Esophagus squamous epithelium (tissue), 5 donors: ENCODE measurements at regions of chr1 and their contacts with region 1.

Region 1: DNA sequence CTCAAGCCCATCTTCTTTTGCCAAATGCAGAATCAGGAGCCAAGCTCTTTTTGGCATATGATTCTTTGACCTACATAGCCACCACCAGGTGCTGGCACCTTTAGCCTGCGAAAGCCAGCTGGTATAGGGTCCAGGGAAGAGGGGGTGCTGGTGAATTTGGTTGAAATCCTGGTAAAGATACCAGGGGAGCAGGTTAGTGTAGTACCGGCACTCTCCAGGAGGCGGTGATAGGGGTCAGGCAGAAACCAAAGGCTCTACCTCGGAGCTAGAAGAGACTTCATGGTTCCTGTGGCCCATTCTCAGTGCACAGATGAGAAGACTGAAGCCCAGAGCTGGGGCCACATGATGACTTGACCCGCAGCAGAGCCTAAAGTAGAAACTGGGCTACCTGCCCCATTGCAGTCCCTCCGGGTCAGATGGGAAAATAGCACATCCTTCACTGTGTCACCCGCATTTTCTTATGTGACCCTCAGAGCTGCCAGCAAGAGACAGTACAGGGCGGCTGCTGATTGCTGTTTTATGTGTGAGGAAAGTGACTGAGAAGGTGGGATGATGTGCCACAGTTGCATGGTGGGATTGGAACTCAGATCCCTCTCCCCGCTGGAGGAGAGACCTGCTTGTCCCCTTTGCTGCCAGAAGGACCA is 36.0 kb upstream of the IL19 start:
- DNase-seq: no peak
- H3K4me3 ChIP-seq: no peak overlapping the region
- H3K27ac ChIP-seq: no peak overlapping the region
- H3K4me1 ChIP-seq: peaks cover 0 to 35% (median 0%) of the 10 kb centered on the region in 3 donors
- H3K27me3 ChIP-seq: no peaks in the 10 kb centered on the region
- CTCF ChIP-seq: peak; percentile 72 to 87 (median 80)
- POLR2A ChIP-seq: no peak

Region 2: GRCh38 chr1:206912445-206913095 is 177.9 kb after region 1 on chr1:
- intact Hi-C with region 1: loop called (anchors 5 kb)
- DNase-seq: peak; percentile 13
- H3K4me3 ChIP-seq: no peak overlapping the region
- H3K27ac ChIP-seq: no peak overlapping the region
- H3K4me1 ChIP-seq: peaks cover 11 to 36% (median 12%) of the 10 kb centered on the region in 3 donors
- H3K27me3 ChIP-seq: peaks cover 0 to 26% (median 0%) of the 10 kb centered on the region in 4 donors
- CTCF ChIP-seq: peak; percentile 84 to 93 (median 90)
- POLR2A ChIP-seq: no peak